Mammary epithelial cell (primary cell): ENCODE measurements at regions of chr2 and their contacts with region 1.

Region 1: DNA sequence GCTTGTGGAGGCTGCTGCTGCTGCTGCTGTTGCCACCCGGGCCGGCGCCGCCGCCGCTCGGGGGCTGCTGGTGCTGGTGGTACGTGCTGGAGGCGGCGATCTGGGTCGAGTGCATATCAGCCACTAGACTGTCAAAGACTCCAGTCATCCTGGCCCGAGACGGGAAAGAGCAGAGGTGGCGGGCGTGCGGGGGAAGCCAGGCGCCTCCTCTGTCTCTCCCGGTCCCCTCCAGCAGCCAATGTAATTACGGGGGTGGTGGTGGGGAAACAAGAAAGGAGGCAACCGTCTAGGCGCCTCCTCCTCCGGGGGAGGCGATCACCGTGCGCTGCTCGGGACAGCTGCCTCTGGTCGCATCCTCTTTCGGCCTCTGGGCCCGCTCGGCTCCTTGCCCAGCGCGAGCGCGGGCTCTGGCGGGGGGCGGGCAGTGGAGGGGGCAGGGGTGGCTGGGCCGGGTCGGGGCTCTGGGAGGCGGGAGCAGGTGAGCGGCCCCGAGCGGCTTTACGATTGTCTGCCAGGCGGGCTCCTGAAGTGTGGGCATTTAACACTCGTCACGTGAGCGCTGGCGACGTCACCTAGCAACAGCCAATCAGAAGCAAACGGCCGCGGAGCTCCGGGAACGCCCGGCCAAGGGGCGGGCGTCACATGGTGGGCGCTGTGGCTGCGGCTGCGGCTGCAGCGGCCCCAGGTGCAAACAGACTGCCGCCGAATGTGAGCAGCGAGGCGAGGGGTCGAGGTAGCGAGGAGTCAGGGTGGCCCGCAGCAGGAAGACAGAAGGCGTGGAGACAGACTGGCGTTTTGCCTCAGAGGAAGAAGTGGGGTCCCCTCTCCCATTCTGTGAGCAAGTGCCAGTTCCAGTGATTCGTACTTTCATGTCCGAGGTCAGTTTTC is at the start of gene DLX2:
- DNase-seq: peak; percentile 84
- H3K4me3 ChIP-seq: peak within 1 kb of the TSS; percentile 49 to 73 (median 57)
- H3K27ac ChIP-seq: peak within 1 kb of the TSS; percentile 23
- H3K4me1 ChIP-seq: peaks cover 42% of the 10 kb centered on the region
- H3K27me3 ChIP-seq: no peaks in the 10 kb centered on the region
- CTCF ChIP-seq: no peak
- total RNA-seq, gene DLX2: under 0.01 to 9.9 TPM

Region 2: GRCh38 chr2:171574149-171574795 is 528.4 kb before region 1 on chr2:
- CTCF ChIA-PET with region 1: no interaction called
- dilution Hi-C with region 1: no loop called
- in situ Hi-C with region 1: loop called in 1 of 2 experiments (anchors 25 kb)
- intact Hi-C with region 1: loop called (anchors 1 kb)
- DNase-seq: peak; percentile 66
- H3K4me3 ChIP-seq: no peak overlapping the region
- H3K27ac ChIP-seq: no peak overlapping the region
- H3K4me1 ChIP-seq: no peaks in the 10 kb centered on the region
- H3K27me3 ChIP-seq: no peaks in the 10 kb centered on the region
- CTCF ChIP-seq: peak; percentile 95 to 97

Region 3: DNA sequence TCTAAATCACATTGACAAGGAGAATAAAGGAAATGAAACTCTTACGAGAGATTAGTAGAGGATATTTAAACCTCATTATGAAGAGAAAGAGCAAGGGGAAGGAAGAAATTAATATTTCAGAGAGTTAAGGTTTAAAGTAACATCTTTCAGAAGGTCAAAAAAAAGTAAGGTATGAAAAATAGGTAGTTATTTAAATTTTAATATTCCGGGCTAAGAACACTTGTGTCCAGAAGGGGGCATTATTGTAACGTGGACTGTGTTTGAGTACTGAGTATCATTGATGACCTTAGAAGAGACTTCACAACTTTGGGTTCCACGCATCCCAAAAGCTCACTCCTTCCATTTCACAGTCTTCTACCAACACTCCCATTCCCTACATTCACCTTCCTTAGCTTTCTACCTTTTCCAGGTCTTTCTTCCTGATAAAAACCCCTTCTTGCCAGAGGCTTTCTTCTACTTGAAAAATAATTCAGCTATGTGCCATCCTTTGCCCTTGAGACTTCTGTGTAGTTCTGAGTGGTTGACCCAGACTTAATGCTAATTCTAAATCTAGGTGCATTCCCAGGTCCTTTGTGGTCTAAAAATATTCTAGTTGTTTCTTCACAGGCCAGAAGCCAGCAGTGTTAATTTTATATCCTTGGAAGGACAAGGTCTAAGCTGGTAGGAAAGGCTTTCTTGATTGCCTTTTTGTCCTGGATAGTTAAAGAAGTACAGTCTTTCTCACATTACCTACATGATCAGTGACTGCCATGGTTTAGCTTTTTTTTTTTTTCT is 398.9 kb before region 1 on chr2:
- CTCF ChIA-PET with region 1: no interaction called
- dilution Hi-C with region 1: no loop called
- in situ Hi-C with region 1: no loop called
- intact Hi-C with region 1: loop called (anchors 1 kb)
- DNase-seq: peak; percentile 23
- H3K4me3 ChIP-seq: no peak overlapping the region
- H3K27ac ChIP-seq: no peak overlapping the region
- H3K4me1 ChIP-seq: peaks cover 9% of the 10 kb centered on the region
- H3K27me3 ChIP-seq: no peaks in the 10 kb centered on the region
- CTCF ChIP-seq: peak; percentile 41 to 54

Region 4: DNA sequence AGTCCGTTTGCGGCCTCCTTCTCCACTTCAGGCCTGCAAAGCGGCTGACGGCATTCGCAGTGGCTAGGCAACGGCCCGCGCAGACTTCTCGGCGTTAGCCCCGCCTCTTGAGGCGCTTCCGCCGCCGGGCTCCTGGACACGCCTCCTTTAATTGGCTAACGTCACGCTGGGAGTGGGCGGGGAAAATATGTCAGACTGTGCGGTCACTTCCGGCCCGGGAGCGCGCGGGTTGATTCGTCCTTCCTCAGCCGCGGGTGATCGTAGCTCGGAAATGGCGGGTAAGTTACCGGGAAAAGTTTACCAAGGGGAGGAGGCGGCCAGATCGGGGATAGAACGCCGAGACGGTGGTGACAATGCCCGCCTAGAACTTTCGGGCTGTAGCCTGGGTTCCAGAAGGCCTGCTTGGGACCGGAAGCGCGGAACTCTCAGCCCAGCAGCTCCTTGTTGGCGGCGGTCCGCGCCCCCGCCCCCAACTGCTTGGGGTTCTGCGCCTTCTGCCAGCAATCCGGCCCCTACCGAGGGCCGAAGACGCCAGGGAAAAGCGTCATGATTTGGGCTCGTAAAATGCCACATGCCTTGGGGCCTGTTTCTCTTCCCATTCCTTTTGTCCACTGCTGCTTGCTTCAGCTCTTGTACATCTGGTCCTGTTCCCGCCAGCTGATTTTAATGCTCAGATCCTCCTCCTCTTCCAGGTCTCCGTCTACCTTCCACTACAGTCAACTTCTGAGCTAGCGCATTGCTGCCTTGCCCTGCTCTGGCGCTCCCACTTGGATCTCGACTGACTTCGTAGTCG is 180.2 kb before region 1 on chr2 and contains the start of gene HAT1:
- CTCF ChIA-PET with region 1: no interaction called
- dilution Hi-C with region 1: no loop called
- in situ Hi-C with region 1: no loop called
- intact Hi-C with region 1: loop called (anchors 2 kb)
- DNase-seq: peak; percentile 96
- H3K4me3 ChIP-seq: peak within 1 kb of the TSS; percentile 72 to 77 (median 73)
- H3K27ac ChIP-seq: peak within 1 kb of the TSS; percentile 88
- H3K4me1 ChIP-seq: no peaks in the 10 kb centered on the region
- H3K27me3 ChIP-seq: no peaks in the 10 kb centered on the region
- CTCF ChIP-seq: no peak
- total RNA-seq, gene HAT1: 30.8 to 56.3 TPM

Region 5: GRCh38 chr2:171957061-171957460 is 145.6 kb before region 1 on chr2:
- CTCF ChIA-PET with region 1: no interaction called
- dilution Hi-C with region 1: no loop called
- in situ Hi-C with region 1: no loop called
- intact Hi-C with region 1: loop called (anchors 1 kb)
- DNase-seq: peak; percentile 14
- H3K4me3 ChIP-seq: no peak overlapping the region
- H3K27ac ChIP-seq: no peak overlapping the region
- H3K4me1 ChIP-seq: peaks cover 10% of the 10 kb centered on the region
- H3K27me3 ChIP-seq: no peaks in the 10 kb centered on the region
- CTCF ChIP-seq: peak in 1 of 2 donors; percentile 45

Region 6: GRCh38 chr2:172038604-172039003 is 64.0 kb before region 1 on chr2:
- CTCF ChIA-PET with region 1: no interaction called
- dilution Hi-C with region 1: no loop called
- in situ Hi-C with region 1: no loop called
- intact Hi-C with region 1: loop called (anchors 2 kb)
- DNase-seq: peak; percentile 88
- H3K4me3 ChIP-seq: no peak overlapping the region
- H3K27ac ChIP-seq: no peak overlapping the region
- H3K4me1 ChIP-seq: no peaks in the 10 kb centered on the region
- H3K27me3 ChIP-seq: no peaks in the 10 kb centered on the region
- CTCF ChIP-seq: no peak

Region 7: DNA sequence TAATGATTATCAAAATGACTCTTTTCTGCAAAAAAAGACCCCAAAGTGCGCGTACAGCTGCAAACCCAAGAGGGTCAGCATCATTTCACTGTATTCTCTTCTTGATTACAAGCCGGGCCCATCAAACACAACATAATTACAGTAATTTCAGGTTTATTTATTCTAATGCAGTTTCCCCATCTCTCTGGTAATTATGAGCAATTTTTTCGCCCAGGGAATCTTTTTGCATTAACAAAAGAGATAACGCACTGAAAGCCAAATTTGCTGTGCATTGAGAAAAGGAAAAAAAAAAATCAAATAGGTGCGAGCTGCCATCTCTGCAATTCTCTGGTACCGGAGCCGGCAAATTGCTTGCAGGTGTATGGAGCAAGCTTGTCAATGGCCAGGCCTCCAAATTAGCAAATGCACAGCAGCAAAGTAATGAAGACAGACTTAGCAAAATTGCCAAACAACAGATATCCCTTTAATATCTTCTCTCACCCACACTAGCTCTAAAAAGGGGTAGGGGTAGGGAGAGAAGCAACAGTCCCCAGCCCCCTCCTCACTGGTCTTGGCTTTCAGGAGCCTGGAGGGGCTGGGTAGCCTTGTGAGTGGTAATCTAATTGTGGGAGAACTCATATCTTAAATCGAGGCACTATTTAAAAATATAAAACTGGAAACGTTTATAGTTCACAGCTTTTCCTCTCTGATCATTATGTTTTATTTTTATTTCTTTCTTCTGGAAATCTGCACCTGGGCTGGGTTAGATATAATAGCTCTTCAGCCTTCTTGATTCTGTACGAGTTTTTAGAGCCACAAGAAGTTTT is 10.7 kb before region 1 on chr2:
- CTCF ChIA-PET with region 1: no interaction called
- dilution Hi-C with region 1: no loop called
- in situ Hi-C with region 1: no loop called
- intact Hi-C with region 1: no loop called
- DNase-seq: no peak
- H3K4me3 ChIP-seq: no peak overlapping the region
- H3K27ac ChIP-seq: no peak overlapping the region
- H3K4me1 ChIP-seq: peaks cover 26% of the 10 kb centered on the region
- H3K27me3 ChIP-seq: peaks cover 6% of the 10 kb centered on the region
- CTCF ChIP-seq: no peak

Region 8: GRCh38 chr2:172147944-172148650 is 45.5 kb after region 1 on chr2:
- CTCF ChIA-PET with region 1: no interaction called
- dilution Hi-C with region 1: no loop called
- in situ Hi-C with region 1: no loop called
- intact Hi-C with region 1: no loop called
- DNase-seq: peak; percentile 67
- H3K4me3 ChIP-seq: no peak overlapping the region
- H3K27ac ChIP-seq: no peak overlapping the region
- H3K4me1 ChIP-seq: peaks cover 9% of the 10 kb centered on the region
- H3K27me3 ChIP-seq: no peaks in the 10 kb centered on the region
- CTCF ChIP-seq: no peak